Gastrocnemius medialis (tissue), 4 donors: ENCODE measurements at regions of chr7 and their contacts with region 1.

Region 1: DNA sequence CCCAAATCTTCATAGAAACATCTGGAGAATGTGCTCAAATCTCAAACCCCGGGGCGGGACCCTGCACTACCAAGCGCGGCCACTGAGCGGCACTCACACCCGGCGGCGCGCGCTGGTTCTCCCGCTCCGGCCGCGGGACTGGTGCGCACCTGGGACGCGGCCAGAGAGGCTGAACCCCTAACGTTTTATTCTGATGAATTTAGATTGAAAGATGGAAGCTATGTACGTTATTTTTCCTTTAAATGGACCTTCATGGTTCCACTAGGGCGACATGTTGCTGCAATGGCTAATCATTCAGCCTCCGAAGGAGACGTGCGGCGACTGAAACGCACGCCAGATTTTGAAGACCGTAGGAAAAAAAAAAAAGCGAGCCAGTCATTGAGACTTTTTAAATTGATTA is 107.0 kb upstream of the INSIG1 start:
- DNase-seq: peak in 1 of 2 donors; percentile 38
- ATAC-seq: peak; percentile 33 to 42
- H3K4me3 ChIP-seq: peak overlapping the region; percentile 22 to 39 (median 26)
- H3K27ac ChIP-seq: no peak overlapping the region
- H3K4me1 ChIP-seq: peaks cover 0 to 3% of the 10 kb centered on the region in 2 donors
- H3K27me3 ChIP-seq: peaks cover 0 to 3% (median 0%) of the 10 kb centered on the region in 3 donors
- CTCF ChIP-seq: peak; percentile 87 to 95 (median 89)
- POLR2A ChIP-seq: no peak

Region 2: DNA sequence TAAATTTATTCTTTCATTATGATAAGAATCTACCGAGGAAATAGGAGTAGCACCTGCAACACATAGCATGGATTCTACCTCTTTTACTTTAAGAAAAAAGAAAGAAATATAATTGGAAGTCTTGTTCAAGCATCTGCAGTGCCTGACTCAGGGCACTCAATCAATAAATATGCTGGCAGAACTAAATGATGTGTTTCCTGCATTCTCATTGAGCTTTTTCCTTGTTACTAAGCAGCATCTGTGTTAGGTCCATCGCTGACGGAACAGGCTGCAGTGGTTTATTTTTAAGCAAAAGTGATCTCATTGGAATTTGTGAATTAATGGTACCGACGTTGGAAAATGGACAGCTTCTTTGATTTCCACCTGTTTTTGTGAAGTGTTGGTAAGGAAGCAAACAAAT is 721.0 kb before region 1 on chr7:
- in situ Hi-C with region 1: no loop called
- intact Hi-C with region 1: no loop called
- DNase-seq: no peak
- ATAC-seq: no peak
- H3K4me3 ChIP-seq: no peak overlapping the region
- H3K27ac ChIP-seq: no peak overlapping the region
- H3K4me1 ChIP-seq: no peaks in the 10 kb centered on the region
- H3K27me3 ChIP-seq: no peaks in the 10 kb centered on the region
- CTCF ChIP-seq: no peak
- POLR2A ChIP-seq: no peak

Region 3: GRCh38 chr7:154913638-154914312 is 276.9 kb before region 1 on chr7:
- in situ Hi-C with region 1: loop called in 1 of 4 experiments (anchors 25 kb)
- intact Hi-C with region 1: no loop called
- DNase-seq: peak; percentile 51 to 63
- ATAC-seq: peak; percentile 78 to 84
- H3K4me3 ChIP-seq: peak overlapping the region; percentile 10 to 53 (median 35)
- H3K27ac ChIP-seq: no peak overlapping the region
- H3K4me1 ChIP-seq: peaks cover 0 to 3% of the 10 kb centered on the region in 2 donors
- H3K27me3 ChIP-seq: peaks cover 0 to 2% (median 0%) of the 10 kb centered on the region in 3 donors
- CTCF ChIP-seq: peak; percentile 60 to 93 (median 83)
- POLR2A ChIP-seq: no peak

Region 4: GRCh38 chr7:155230168-155230593 is 39.5 kb after region 1 on chr7:
- in situ Hi-C with region 1: no loop called
- intact Hi-C with region 1: no loop called
- DNase-seq: peak; percentile 75 to 81
- ATAC-seq: peak; percentile 97
- H3K4me3 ChIP-seq: no peak overlapping the region
- H3K27ac ChIP-seq: peak overlapping the region in 1 of 4 donors; percentile 27
- H3K4me1 ChIP-seq: no peaks in the 10 kb centered on the region
- H3K27me3 ChIP-seq: no peaks in the 10 kb centered on the region
- CTCF ChIP-seq: no peak
- POLR2A ChIP-seq: no peak

Region 5: GRCh38 chr7:155257482-155258225 is 67.0 kb after region 1 on chr7:
- in situ Hi-C with region 1: no loop called
- intact Hi-C with region 1: loop called (anchors 5 kb)
- DNase-seq: peak; percentile 58 to 82
- ATAC-seq: peak; percentile 76 to 80
- H3K4me3 ChIP-seq: peak overlapping the region; percentile 9 to 48 (median 28)
- H3K27ac ChIP-seq: peak overlapping the region; percentile 77 to 88 (median 80)
- H3K4me1 ChIP-seq: peaks cover 9 to 14% of the 10 kb centered on the region in 2 donors
- H3K27me3 ChIP-seq: no peaks in the 10 kb centered on the region
- CTCF ChIP-seq: no peak
- POLR2A ChIP-seq: no peak

Region 6: GRCh38 chr7:155344600-155345433 is 154.1 kb after region 1 on chr7:
- in situ Hi-C with region 1: loop called (anchors 5 to 10 kb)
- intact Hi-C with region 1: loop called (anchors 1 kb)
- DNase-seq: peak; percentile 19 to 52
- ATAC-seq: peak; percentile 95 to 100
- H3K4me3 ChIP-seq: peak overlapping the region; percentile 8 to 61 (median 38)
- H3K27ac ChIP-seq: no peak overlapping the region
- H3K4me1 ChIP-seq: peaks cover 0 to 4% of the 10 kb centered on the region in 2 donors
- H3K27me3 ChIP-seq: peaks cover 8 to 11% (median 11%) of the 10 kb centered on the region in 3 donors
- CTCF ChIP-seq: peak; percentile 78 to 99 (median 93)
- POLR2A ChIP-seq: no peak

Region 7: DNA sequence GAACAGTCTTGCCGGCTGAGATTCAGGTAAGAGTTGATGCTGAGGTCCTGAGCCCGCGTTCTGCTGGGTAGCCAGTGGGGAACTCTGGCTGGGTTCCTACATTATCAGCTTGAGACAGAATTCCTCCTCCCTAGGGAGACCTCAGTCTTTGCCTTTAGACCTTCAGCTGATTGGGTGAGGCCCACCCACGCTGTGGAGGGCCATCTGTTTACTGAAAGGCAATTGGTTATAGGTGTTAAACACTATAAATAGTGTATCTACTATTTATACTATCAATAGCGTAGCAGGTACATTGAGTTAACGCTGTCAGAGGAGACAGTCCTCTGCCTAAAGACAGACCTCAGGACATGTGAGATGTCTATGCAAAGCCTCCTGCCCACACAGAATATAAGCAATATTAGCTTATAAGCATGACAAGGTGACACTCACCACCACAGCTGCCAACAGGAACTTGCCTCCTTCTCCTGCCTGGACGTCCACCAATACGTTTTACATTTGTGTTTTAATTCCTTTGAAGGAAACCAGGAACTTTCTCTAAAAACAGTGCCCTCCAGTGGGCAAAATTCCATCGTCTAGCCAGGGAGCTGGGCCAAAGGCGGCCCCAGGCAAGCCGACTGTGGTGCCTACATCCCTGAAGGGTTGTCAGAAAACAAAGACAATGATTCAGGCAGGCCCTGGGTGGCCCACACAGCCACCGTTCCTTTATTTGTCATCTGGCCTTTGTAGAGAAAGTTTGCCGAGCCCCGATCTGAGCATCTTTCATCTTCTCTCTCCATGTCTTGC is 165.8 kb after region 1 on chr7:
- in situ Hi-C with region 1: loop called in 1 of 4 experiments (anchors 10 kb)
- intact Hi-C with region 1: no loop called
- DNase-seq: no peak
- ATAC-seq: no peak
- H3K4me3 ChIP-seq: no peak overlapping the region
- H3K27ac ChIP-seq: no peak overlapping the region
- H3K4me1 ChIP-seq: no peaks in the 10 kb centered on the region
- H3K27me3 ChIP-seq: peaks cover 39 to 60% (median 55%) of the 10 kb centered on the region in 3 donors
- CTCF ChIP-seq: no peak
- POLR2A ChIP-seq: no peak